GM10248 (cell line): ENCODE measurements at regions of chr3 and their contacts with region 1.

Region 1: GRCh38 chr3:16906682-16907081 is 21.9 kb downstream of the PLCL2 start:
- DNase-seq: no peak
- CTCF ChIP-seq: no peak

Region 2: DNA sequence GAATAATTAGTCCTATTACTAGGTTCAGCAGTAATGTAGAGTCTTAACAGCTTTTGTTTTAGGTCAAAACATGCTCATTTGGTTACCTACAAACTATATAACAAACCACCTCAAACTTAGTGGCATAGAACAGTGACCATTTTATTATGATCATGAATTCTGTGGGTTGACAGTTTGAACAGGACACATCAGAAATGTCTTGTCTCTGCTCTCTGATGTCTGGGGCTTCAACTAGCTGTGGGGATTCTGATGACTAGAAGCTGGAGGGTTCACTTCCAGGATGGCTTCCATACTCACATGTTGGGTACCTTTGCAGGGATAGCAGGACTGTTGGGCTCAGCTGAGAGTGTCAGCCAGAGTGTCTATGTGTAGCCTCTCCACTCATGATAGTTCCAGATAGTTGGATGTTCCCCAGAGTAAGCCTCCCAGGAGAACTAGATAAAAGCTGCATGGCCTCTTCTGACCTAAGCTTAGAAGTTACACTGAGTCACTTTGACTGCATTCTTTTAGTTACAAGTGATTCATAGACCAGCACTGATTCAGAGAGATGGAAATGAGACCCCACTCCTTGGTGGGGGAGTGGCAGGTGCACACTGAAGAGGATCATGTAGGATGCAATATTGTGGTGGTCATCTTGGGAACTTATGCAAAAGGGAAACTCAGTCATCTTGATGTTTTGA is 10.7 kb after region 1 on chr3:
- CTCF ChIA-PET with region 1: interaction called, 11 read pairs
- POLR2A ChIA-PET with region 1: no interaction called
- DNase-seq: no peak
- CTCF ChIP-seq: no peak

Region 3: GRCh38 chr3:16993227-16993626 is 86.5 kb after region 1 on chr3:
- CTCF ChIA-PET with region 1: no interaction called
- POLR2A ChIA-PET with region 1: no interaction called
- DNase-seq: no peak
- CTCF ChIP-seq: no peak

Region 4: GRCh38 chr3:17151598-17152373 is 245.1 kb after region 1 on chr3:
- CTCF ChIA-PET with region 1: no interaction called
- POLR2A ChIA-PET with region 1: interaction called, 10 read pairs
- DNase-seq: peak; percentile 88
- CTCF ChIP-seq: no peak